OCI-LY7 (cell line): ENCODE measurements at regions of chr7 and their contacts with region 1.

Region 1: DNA sequence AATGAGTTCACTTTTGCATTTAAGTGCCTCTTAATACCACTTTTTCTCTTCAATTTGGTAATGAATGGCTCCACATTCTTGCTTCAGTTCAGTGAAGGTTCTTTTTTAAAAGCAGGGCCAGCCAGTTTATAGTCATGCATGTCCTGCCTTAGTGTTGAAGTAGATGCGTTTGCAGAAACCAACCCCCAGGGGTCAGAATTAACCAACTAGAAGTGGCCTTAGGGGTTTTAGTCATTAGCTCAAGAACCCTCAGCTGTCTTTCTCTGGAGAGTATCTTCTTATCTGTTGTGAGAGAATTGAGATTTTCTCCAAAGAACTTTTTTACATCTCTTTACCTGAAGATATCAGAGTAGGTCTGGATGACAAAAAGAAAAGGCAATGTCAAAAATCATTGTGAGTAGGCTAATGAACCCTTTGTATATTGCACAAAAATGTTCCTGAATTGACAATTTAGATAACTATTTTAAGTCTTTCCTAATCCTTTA is 82.2 kb downstream of the PIK3CG start:
- DNase-seq: peak; percentile 92
- H3K4me3 ChIP-seq: no peak overlapping the region
- H3K27ac ChIP-seq: no peak overlapping the region
- H3K4me1 ChIP-seq: peaks cover 18% of the 10 kb centered on the region
- CTCF ChIP-seq: peak; percentile 99

Region 2: GRCh38 chr7:106522696-106523095 is 424.6 kb before region 1 on chr7:
- CTCF ChIA-PET with region 1: no interaction called
- POLR2A ChIA-PET with region 1: no interaction called
- intact Hi-C with region 1: no loop called
- DNase-seq: no peak
- H3K4me3 ChIP-seq: no peak overlapping the region
- H3K27ac ChIP-seq: no peak overlapping the region
- H3K4me1 ChIP-seq: no peaks in the 10 kb centered on the region
- CTCF ChIP-seq: no peak

Region 3: DNA sequence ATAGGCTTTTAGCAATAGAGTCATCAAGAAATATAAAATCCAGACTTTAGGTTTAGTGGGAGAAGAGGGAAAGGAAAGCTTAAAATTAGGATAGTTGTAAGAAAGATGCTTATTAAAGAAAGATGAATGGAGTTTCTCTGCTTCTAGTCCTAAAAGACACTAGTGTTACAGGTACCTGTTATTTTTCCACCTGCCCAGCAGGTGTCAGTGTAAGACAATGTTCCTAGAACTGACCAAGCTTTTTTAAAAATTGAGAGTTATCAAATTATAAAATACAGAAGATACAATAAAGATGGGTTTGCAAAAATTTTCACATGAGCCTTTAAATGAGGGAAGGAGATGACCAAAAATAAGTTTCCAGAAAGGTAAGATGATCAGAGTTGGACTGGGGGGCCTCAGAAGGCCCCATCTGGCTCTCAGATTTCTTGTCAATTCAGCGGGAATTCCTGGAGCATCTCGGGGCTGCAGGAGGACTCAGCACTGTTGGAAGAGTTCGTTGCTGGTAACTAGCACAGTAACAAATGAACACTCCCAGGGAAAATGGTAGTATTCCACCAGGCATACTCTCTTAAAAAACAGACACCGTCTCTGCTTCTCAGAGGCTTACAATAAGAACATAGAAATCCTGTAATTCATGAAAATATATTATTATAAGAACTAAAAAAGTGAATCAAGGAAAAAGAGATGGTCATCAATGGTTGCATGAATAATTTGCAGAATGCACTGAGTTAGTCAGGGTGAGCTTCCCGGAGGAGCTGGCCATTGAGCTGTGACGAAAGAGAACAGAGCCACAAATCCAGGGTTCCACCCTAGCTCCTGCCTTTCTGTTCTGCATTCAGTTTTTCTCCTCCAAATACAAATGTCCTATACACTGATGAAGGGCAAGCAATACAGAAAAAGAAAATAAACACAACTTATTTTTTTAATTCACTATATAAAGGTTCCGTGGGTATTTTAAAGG is 154.0 kb before region 1 on chr7:
- CTCF ChIA-PET with region 1: no interaction called
- POLR2A ChIA-PET with region 1: interaction called, 3 read pairs
- intact Hi-C with region 1: loop called (anchors 1 kb)
- DNase-seq: peak; percentile 70
- H3K4me3 ChIP-seq: no peak overlapping the region
- H3K27ac ChIP-seq: no peak overlapping the region
- H3K4me1 ChIP-seq: no peaks in the 10 kb centered on the region
- CTCF ChIP-seq: peak; percentile 96